Caco-2 (cell line): ENCODE measurements at regions of chr5 and their contacts with region 1.

Region 1: DNA sequence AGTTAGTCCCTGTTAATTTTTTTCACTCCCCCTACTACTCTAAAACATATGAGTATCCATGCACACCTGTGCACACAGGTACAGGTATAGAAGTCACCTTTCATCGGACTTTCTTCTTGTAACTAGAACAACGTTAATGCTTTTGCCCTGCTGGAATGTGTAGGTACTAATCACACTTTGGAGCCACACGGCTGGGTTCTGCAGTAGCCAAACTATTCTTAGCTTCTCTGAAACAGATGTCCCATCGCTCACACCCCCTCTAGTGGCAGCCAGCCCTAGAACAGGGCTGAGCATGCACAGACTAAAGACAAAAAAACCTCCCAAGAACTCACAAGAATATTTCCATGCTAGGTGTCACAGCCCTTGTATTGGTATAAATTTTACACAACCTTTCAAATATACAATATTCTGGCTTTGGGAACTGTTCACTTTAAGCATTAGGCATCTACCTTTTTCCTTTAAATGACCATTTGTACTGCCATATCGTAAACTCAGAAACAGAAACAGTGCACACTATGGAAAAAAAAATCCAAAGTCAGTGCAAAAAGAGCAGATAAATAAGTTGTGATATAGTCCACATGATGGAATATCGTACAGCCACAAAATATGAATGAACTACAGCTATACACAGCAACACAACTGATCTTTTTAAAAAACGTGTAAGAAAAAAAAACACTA is 64.0 kb downstream of the RETREG1 start:
- DNase-seq: peak; percentile 88 to 89
- H3K4me3 ChIP-seq: no peak overlapping the region
- H3K4me3 Mint-ChIP-seq: no peak overlapping the region
- H3K27ac Mint-ChIP-seq: peak overlapping the region; percentile 61
- H3K4me1 ChIP-seq: peaks cover 24% of the 10 kb centered on the region
- H3K4me1 Mint-ChIP-seq: peaks cover 24% of the 10 kb centered on the region
- H3K27me3 ChIP-seq: no peaks in the 10 kb centered on the region
- H3K27me3 Mint-ChIP-seq: no peaks in the 10 kb centered on the region
- CTCF ChIP-seq: peak; percentile 87 to 97

Region 2: GRCh38 chr5:16160706-16161105 is 392.1 kb before region 1 on chr5:
- CTCF ChIA-PET with region 1: no interaction called
- POLR2A ChIA-PET with region 1: no interaction called
- intact Hi-C with region 1: loop called (anchors 10 kb)
- DNase-seq: peak; percentile 47 to 61
- H3K4me3 ChIP-seq: no peak overlapping the region
- H3K4me3 Mint-ChIP-seq: no peak overlapping the region
- H3K27ac Mint-ChIP-seq: no peak overlapping the region
- H3K4me1 ChIP-seq: no peaks in the 10 kb centered on the region
- H3K4me1 Mint-ChIP-seq: no peaks in the 10 kb centered on the region
- H3K27me3 ChIP-seq: no peaks in the 10 kb centered on the region
- H3K27me3 Mint-ChIP-seq: peaks cover 7% of the 10 kb centered on the region
- CTCF ChIP-seq: peak; percentile 67 to 79

Region 3: GRCh38 chr5:16489322-16489791 is 63.4 kb before region 1 on chr5:
- CTCF ChIA-PET with region 1: interaction called, 9 read pairs
- POLR2A ChIA-PET with region 1: no interaction called
- intact Hi-C with region 1: loop called (anchors 1 kb)
- DNase-seq: peak in 1 of 2 experiments; percentile 48
- H3K4me3 ChIP-seq: no peak overlapping the region
- H3K4me3 Mint-ChIP-seq: no peak overlapping the region
- H3K27ac Mint-ChIP-seq: peak overlapping the region; percentile 54
- H3K4me1 ChIP-seq: peaks cover 52% of the 10 kb centered on the region
- H3K4me1 Mint-ChIP-seq: peaks cover 31% of the 10 kb centered on the region
- H3K27me3 ChIP-seq: no peaks in the 10 kb centered on the region
- H3K27me3 Mint-ChIP-seq: no peaks in the 10 kb centered on the region
- CTCF ChIP-seq: peak; percentile 75 to 79

Region 4: GRCh38 chr5:16585041-16585667 is 32.3 kb after region 1 on chr5:
- CTCF ChIA-PET with region 1: interaction called, 3 read pairs
- POLR2A ChIA-PET with region 1: no interaction called
- intact Hi-C with region 1: loop called (anchors 1 kb)
- DNase-seq: peak; percentile 83 to 91
- H3K4me3 ChIP-seq: no peak overlapping the region
- H3K4me3 Mint-ChIP-seq: peak overlapping the region; percentile 58
- H3K27ac Mint-ChIP-seq: peak overlapping the region; percentile 86
- H3K4me1 ChIP-seq: peaks cover 50% of the 10 kb centered on the region
- H3K4me1 Mint-ChIP-seq: peaks cover 52% of the 10 kb centered on the region
- H3K27me3 ChIP-seq: no peaks in the 10 kb centered on the region
- H3K27me3 Mint-ChIP-seq: no peaks in the 10 kb centered on the region
- CTCF ChIP-seq: peak; percentile 40 to 79

Region 5: DNA sequence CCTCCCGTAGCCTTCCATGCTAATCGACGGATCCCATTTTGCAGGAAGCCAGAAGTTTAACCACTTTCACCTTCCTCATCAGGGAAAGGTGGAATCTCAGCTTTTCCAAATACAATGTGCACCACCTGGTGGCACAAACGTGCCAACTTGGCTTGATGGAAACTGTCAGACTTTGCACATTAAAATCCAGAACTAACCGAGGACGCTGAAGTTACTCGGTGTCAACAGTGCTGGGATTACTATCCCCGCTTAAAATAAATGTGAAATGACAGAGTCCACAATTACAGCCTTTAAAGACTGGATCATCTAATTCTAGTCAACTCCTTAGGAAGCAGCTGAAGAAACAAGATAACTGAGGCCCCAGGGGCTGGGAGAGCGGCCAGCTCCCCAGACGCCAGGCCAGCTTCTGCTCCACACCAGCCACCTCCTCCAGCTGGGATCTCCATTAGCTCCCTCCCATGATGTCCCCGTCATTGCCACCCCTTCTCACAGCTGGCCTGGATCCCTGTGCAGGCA is 114.1 kb after region 1 on chr5:
- CTCF ChIA-PET with region 1: interaction called, 7 read pairs
- POLR2A ChIA-PET with region 1: no interaction called
- intact Hi-C with region 1: loop called (anchors 1 kb)
- DNase-seq: peak in 1 of 2 experiments; percentile 50
- H3K4me3 ChIP-seq: no peak overlapping the region
- H3K4me3 Mint-ChIP-seq: no peak overlapping the region
- H3K27ac Mint-ChIP-seq: peak overlapping the region; percentile 7
- H3K4me1 ChIP-seq: 0 out of 2 replicates have a peak, but pooled peaks cover 3% of the 10 kb centered on the region
- H3K4me1 Mint-ChIP-seq: no peaks in the 10 kb centered on the region
- H3K27me3 ChIP-seq: no peaks in the 10 kb centered on the region
- H3K27me3 Mint-ChIP-seq: no peaks in the 10 kb centered on the region
- CTCF ChIP-seq: peak; percentile 60 to 66

Region 6: GRCh38 chr5:16693879-16694278 is 141.1 kb after region 1 on chr5:
- CTCF ChIA-PET with region 1: no interaction called
- POLR2A ChIA-PET with region 1: no interaction called
- intact Hi-C with region 1: no loop called
- DNase-seq: no peak
- H3K4me3 ChIP-seq: no peak overlapping the region
- H3K4me3 Mint-ChIP-seq: no peak overlapping the region
- H3K27ac Mint-ChIP-seq: peak overlapping the region; percentile 13
- H3K4me1 ChIP-seq: no peaks in the 10 kb centered on the region
- H3K4me1 Mint-ChIP-seq: peaks cover 6% of the 10 kb centered on the region
- H3K27me3 ChIP-seq: no peaks in the 10 kb centered on the region
- H3K27me3 Mint-ChIP-seq: no peaks in the 10 kb centered on the region
- CTCF ChIP-seq: no peak

Region 7: DNA sequence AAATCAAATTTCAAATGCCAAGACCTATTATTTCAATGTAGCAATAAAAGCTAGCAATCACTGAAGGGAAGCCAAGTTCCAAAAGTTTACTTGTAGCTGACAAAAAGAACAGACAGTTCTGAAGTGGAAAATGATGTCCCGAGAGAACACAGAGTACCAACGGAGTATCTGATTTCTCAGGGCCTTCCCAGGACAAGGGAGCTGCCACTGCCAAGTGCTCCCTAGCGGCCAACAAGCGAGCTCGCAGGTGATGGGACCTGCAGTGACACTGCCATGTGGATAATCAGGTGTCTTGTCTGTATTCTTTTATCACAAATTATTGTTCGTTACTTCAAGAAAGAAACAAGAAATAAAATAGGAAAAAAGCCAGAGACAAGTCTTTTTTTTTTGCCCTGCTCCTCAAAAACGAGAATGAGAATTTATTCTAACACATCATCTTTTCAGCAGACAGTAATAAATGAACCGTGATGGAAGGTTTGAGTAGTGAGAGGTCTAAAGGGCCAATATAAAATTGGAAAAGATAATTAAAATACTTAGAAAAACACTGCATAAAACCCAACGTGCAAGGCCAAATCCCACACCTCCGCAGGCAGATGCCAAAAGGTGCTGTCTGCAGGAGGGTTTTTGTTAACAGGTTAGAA is 223.9 kb after region 1 on chr5:
- CTCF ChIA-PET with region 1: no interaction called
- POLR2A ChIA-PET with region 1: no interaction called
- intact Hi-C with region 1: no loop called
- DNase-seq: peak in 1 of 2 experiments; percentile 13
- H3K4me3 ChIP-seq: no peak overlapping the region
- H3K4me3 Mint-ChIP-seq: no peak overlapping the region
- H3K27ac Mint-ChIP-seq: no peak overlapping the region
- H3K4me1 ChIP-seq: no peaks in the 10 kb centered on the region
- H3K4me1 Mint-ChIP-seq: no peaks in the 10 kb centered on the region
- H3K27me3 ChIP-seq: no peaks in the 10 kb centered on the region
- H3K27me3 Mint-ChIP-seq: no peaks in the 10 kb centered on the region
- CTCF ChIP-seq: peak in 1 of 2 experiments; percentile 26